Sigmoid colon (tissue), 7 donors: ENCODE measurements at regions of chr5 and their contacts with region 1.

Region 1: GRCh38 chr5:148179234-148179824 is 11.0 kb downstream of the SPINK14 start:
- DNase-seq: no peak
- H3K4me3 ChIP-seq: no peak overlapping the region
- H3K27ac ChIP-seq: no peak overlapping the region
- H3K4me1 ChIP-seq: peaks cover 0 to 11% (median 2%) of the 10 kb centered on the region in 4 donors
- H3K27me3 ChIP-seq: no peaks in the 10 kb centered on the region
- CTCF ChIP-seq: peak; percentile 42 to 73 (median 54)
- EP300 ChIP-seq: no peak
- POLR2A ChIP-seq: no peak

Region 2: DNA sequence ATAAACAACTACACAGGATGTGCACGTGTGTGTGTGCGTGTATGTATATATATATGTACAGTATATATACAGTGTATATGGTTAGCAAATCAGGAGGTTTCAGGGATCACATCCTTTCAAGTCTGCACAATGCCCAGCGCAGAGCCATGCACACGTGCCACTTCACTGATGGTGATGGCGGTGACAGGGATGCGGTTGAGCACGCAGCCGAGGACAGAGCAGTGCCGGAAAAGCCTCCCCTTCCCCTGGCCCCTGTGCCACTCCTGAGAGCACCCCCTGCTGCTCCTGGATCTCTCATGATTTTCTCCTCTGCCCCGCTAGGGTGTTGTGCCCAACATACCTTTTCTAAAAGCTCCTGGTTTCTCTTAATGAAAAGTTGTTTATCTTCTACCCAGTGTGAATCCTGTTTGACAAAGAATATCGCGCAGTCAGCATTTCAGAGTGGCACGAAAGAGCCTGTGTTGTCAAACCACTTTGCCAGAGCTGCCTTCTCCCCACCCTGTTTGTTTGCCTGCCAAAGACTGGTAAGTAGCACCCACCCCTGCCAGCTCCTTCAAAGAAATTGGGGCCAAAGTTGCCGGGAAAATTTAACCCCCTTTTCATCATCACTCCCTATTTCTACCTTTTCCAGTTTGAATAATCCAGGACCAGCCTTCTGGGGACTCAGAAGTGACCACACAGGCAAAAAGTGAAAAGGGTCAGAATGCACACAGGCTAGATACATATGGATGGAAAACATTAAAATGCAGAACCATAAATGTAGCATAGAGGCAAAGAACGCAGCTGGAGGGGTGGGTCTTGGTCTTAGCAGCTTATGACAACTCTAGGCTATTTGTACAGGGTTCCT is 543.2 kb before region 1 on chr5:
- intact Hi-C with region 1: no loop called
- DNase-seq: no peak
- H3K4me3 ChIP-seq: no peak overlapping the region
- H3K27ac ChIP-seq: no peak overlapping the region
- H3K4me1 ChIP-seq: no peaks in the 10 kb centered on the region
- H3K27me3 ChIP-seq: no peaks in the 10 kb centered on the region
- CTCF ChIP-seq: no peak
- EP300 ChIP-seq: no peak
- POLR2A ChIP-seq: no peak

Region 3: DNA sequence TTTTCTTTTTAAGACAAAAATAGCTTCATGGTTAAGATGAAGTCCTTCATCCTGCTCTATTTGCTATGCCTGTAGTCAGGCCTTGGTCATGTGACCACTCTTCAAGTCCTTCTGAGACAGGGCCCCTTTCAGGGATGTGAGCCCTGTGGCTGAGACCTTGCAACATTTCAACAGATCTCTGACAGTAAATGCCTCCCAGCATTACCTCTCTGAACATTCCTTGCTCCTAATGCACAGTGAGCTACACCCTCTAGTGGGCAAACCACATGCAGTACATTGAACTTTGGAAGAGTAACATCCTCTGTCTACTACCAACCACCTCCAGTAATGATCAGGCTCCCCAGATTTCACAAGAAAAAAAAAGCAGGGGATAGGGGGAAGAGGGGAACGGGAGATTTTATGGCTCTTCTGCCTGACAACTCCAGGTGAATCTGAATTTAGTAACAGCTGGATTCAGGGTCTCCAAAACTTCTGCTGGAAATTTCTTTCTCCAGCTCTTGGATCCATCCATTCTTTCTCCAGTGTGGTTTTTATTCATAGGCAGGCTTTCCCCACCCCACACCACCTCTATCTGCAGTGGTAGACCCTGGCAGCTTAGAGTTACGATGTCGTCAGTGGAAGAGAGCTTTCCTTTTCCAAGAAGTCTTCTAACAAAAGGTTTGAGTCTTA is 195.5 kb after region 1 on chr5:
- intact Hi-C with region 1: loop called (anchors 2 kb)
- DNase-seq: no peak
- H3K4me3 ChIP-seq: no peak overlapping the region
- H3K27ac ChIP-seq: no peak overlapping the region
- H3K4me1 ChIP-seq: peaks cover 0 to 8% (median 0%) of the 10 kb centered on the region in 4 donors
- H3K27me3 ChIP-seq: no peaks in the 10 kb centered on the region
- CTCF ChIP-seq: peak in 3 of 4 experiments; percentile 43 to 62 (median 61)
- EP300 ChIP-seq: no peak
- POLR2A ChIP-seq: no peak

Region 4: DNA sequence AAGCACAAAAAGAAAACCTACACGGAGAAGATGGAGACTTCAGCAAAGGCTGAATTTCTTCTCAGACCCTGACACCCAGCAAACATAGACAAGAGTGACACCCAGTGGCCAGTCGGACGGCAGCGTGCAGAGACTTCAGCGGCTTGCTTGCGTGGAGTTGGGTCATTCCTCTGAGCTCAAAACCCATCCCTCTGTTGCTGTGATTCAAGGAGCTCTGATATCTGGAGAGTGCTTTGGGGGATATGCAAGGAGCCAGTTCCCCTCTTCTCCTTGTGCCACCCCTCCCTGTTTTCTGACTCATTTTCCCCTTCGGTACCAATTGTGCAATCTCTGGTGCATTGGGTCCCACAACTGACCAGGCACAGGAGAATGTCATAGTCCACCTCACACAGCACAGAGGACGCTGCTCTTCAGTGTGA is 856.1 kb after region 1 on chr5:
- intact Hi-C with region 1: loop called (anchors 10 kb)
- DNase-seq: peak; percentile 81
- H3K4me3 ChIP-seq: no peak overlapping the region
- H3K27ac ChIP-seq: no peak overlapping the region
- H3K4me1 ChIP-seq: no peaks in the 10 kb centered on the region
- H3K27me3 ChIP-seq: no peaks in the 10 kb centered on the region
- CTCF ChIP-seq: peak; percentile 50 to 82 (median 71)
- EP300 ChIP-seq: no peak
- POLR2A ChIP-seq: no peak